ENCODE measurements at regions of chr19 and their contacts with region 1.

Region 1: DNA sequence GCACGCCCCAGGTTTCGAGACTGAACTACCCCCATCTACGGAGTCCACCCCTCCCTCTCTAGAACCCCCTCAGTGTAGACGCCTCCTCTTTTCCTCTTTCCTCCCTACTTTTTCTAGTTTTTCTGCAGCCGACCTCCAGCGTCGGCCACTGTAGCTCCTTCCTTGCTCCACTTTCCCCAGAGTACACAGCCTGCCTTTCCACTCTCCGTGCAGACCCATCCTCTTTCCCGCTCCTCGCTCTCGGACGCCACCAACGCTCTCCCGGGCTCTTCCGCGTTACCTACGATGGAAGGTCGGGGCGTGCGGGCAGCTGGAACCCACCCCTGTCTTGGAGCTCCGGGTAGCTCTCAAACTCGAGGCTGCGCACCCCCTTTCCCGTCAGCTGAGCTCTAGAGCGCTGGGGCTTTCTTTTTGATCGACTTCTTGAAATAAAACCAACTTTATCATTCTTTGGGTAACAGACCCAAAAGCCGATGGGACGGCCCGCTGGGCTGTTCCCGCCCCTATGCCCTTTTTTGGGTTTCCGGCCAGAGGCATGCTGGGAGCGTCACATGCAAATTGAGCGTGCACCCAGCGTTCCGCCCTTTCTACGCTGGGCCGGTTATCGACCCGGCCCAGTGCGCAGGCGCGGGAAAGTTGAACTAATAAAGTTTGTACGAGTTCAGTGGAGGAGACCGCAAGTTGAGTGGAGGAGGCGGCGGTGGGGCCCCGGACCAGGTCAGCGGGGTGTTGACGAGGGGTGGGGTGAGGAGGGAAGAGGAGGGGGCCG is at the starts of genes BCL2L12 and IRF3:
- DNase-seq: peak; percentile 98 to 99 (median 99)
- H3K4me3 ChIP-seq: peak within 1 kb of the TSS; percentile 78
- H3K27ac ChIP-seq: peak within 1 kb of the TSS; percentile 54 to 69
- H3K4me1 ChIP-seq: peaks cover 4% of the 10 kb centered on the region
- H3K27me3 ChIP-seq: no peaks in the 10 kb centered on the region
- CTCF ChIP-seq: peak in 1 of 3 donors; percentile 27
- EP300 ChIP-seq: no peak
- POLR2A ChIP-seq: peak; percentile 54
- total RNA-seq, gene BCL2L12: 8.0 to 21.0 (median 15.6) TPM
- total RNA-seq, gene IRF3: 46.1 to 89.0 (median 69.5) TPM

Region 2: GRCh38 chr19:49640113-49640898 is 25.2 kb before region 1 on chr19 and contains the start of gene RRAS:
- intact Hi-C with region 1: loop called in 1 of 4 experiments (anchors 2 kb)
- DNase-seq: peak; percentile 98 to 100 (median 99)
- H3K4me3 ChIP-seq: peak within 1 kb of the TSS; percentile 80
- H3K27ac ChIP-seq: peak within 1 kb of the TSS; percentile 98 to 100
- H3K4me1 ChIP-seq: peaks cover 12% of the 10 kb centered on the region
- H3K27me3 ChIP-seq: no peaks in the 10 kb centered on the region
- CTCF ChIP-seq: no peak
- EP300 ChIP-seq: peak; percentile 81
- POLR2A ChIP-seq: peak; percentile 97
- total RNA-seq, gene RRAS: 28.7 to 62.8 (median 37.6) TPM

Region 3: GRCh38 chr19:49877020-49877878 is 211.7 kb after region 1 on chr19 and contains the starts of genes AKT1S1 and TBC1D17:
- intact Hi-C with region 1: no loop called
- DNase-seq: peak; percentile 99 to 100 (median 99)
- H3K4me3 ChIP-seq: peak within 1 kb of the TSS; percentile 85
- H3K27ac ChIP-seq: peak within 1 kb of the TSS; percentile 97 to 99
- H3K4me1 ChIP-seq: no peaks in the 10 kb centered on the region
- H3K27me3 ChIP-seq: no peaks in the 10 kb centered on the region
- CTCF ChIP-seq: no peak
- EP300 ChIP-seq: no peak
- POLR2A ChIP-seq: peak; percentile 96
- total RNA-seq, gene AKT1S1: 10.6 to 45.3 (median 30.0) TPM
- total RNA-seq, gene TBC1D17: 23.1 to 77.5 (median 49.8) TPM